K562 (cell line): ENCODE measurements at regions of chr15 and their contacts with region 1.

Region 1: DNA sequence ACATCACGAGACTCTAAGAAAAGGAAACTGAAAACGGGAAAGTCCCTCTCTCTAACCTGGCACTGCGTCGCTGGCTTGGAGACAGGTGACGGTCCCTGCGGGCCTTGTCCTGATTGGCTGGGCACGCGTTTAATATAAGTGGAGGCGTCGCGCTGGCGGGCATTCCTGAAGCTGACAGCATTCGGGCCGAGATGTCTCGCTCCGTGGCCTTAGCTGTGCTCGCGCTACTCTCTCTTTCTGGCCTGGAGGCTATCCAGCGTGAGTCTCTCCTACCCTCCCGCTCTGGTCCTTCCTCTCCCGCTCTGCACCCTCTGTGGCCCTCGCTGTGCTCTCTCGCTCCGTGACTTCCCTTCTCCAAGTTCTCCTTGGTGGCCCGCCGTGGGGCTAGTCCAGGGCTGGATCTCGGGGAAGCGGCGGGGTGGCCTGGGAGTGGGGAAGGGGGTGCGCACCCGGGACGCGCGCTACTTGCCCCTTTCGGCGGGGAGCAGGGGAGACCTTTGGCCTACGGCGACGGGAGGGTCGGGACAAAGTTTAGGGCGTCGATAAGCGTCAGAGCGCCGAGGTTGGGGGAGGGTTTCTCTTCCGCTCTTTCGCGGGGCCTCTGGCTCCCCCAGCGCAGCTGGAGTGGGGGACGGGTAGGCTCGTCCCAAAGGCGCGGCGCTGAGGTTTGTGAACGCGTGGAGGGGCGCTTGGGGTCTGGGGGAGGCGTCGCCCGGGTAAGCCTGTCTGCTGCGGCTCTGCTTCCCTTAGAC is at the start of gene B2M:
- DNase-seq: peak; percentile 94 to 96 (median 96)
- ATAC-seq: peak; percentile 93
- H3K4me3 ChIP-seq: peak within 1 kb of the TSS; percentile 74
- H3K27ac ChIP-seq: peak within 1 kb of the TSS; percentile 90
- H3K4me1 ChIP-seq: peaks cover 5 to 14% of the 10 kb centered on the region in 2 experiments; a peak in 4 of 5 replicates
- H3K27me3 ChIP-seq: no peaks in the 10 kb centered on the region
- CTCF ChIP-seq: no peak
- EP300 ChIP-seq: no peak
- POLR2A ChIP-seq: peak; percentile 99
- RAD21 ChIP-seq: no peak
- polyA plus RNA-seq, gene B2M: 2,823 to 3,138 TPM

Region 2: DNA sequence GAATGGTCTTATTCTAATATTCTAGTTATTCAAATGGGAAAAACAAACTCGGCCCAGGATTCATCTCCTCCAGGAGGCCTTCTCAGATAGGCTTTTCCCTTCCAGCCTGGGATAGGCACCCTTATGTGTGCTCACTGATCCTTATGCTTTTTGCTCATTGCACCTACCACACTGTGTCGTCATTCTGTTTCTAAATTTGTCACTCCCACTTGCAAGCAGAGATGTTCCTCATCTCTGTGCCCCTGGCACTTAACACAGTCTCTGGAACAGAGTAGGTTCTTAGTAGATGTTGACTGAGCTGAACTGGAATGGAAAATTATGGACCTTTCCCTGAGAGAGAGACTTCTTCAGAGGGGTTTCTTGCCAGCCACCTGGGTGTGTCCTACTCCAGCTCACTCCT is 29.3 kb before region 1 on chr15:
- CTCF ChIA-PET with region 1: no interaction called
- POLR2A ChIA-PET with region 1: interaction called, 25 read pairs
- in situ Hi-C with region 1: no loop called
- intact Hi-C with region 1: loop called (anchors 1 kb)
- DNase-seq: no peak
- ATAC-seq: peak; percentile 75
- H3K4me3 ChIP-seq: no peak overlapping the region
- H3K27ac ChIP-seq: peak overlapping the region; percentile 16; the same call in 1 of the 3 replicates
- H3K4me1 ChIP-seq: peaks cover 7 to 20% of the 10 kb centered on the region in 2 experiments; a peak in 4 of 5 replicates
- H3K27me3 ChIP-seq: no peaks in the 10 kb centered on the region
- CTCF ChIP-seq: no peak
- EP300 ChIP-seq: no peak
- POLR2A ChIP-seq: no peak
- RAD21 ChIP-seq: no peak

Region 3: GRCh38 chr15:44728576-44729407 is 17.3 kb after region 1 on chr15:
- CTCF ChIA-PET with region 1: interaction called, 3 read pairs
- POLR2A ChIA-PET with region 1: interaction called, 136 read pairs
- in situ Hi-C with region 1: no loop called
- intact Hi-C with region 1: loop called (anchors 2 kb)
- DNase-seq: peak; percentile 83 to 95 (median 88)
- ATAC-seq: peak; percentile 94
- H3K4me3 ChIP-seq: peak overlapping the region; percentile 52
- H3K27ac ChIP-seq: peak overlapping the region; percentile 77
- H3K4me1 ChIP-seq: peaks cover 20 to 29% of the 10 kb centered on the region in 2 experiments
- H3K27me3 ChIP-seq: no peaks in the 10 kb centered on the region
- CTCF ChIP-seq: peak in 1 of 3 experiments; percentile 11; a peak in 1 of 6 replicates
- EP300 ChIP-seq: peak; percentile 79
- POLR2A ChIP-seq: peak; percentile 77
- RAD21 ChIP-seq: peak in 1 of 2 experiments; percentile 26; a peak in 2 of 4 replicates

Region 4: DNA sequence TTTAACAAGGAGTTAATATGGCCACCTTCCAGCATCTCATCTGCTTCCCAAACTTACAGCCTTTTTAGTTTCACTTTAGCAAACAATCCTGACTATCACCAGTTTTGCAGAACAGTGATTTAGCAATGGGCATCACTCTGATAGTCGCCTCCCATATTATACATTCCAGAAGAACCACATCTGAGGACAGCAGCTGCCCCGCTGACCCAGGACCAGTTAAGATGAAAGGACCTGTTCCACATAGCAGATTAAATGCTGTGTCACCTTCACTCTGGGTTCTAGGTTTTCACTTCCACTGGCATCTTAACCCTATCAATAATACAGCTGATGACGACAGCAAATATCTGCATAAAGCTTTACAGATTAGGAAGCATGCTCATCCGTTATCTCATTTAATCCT is 124.6 kb after region 1 on chr15:
- CTCF ChIA-PET with region 1: no interaction called
- POLR2A ChIA-PET with region 1: no interaction called
- in situ Hi-C with region 1: no loop called
- intact Hi-C with region 1: loop called (anchors 10 kb)
- DNase-seq: no peak
- ATAC-seq: no peak
- H3K4me3 ChIP-seq: no peak overlapping the region
- H3K27ac ChIP-seq: no peak overlapping the region
- H3K4me1 ChIP-seq: peaks cover 0 to 8% of the 10 kb centered on the region in 2 experiments; a peak in 3 of 5 replicates
- H3K27me3 ChIP-seq: no peaks in the 10 kb centered on the region
- CTCF ChIP-seq: no peak
- EP300 ChIP-seq: no peak
- POLR2A ChIP-seq: no peak
- RAD21 ChIP-seq: no peak